Naive thymus-derived CD8-positive, alpha-beta T cell (primary cell): ENCODE measurements at regions of chr17 and their contacts with region 1.

Region 1: DNA sequence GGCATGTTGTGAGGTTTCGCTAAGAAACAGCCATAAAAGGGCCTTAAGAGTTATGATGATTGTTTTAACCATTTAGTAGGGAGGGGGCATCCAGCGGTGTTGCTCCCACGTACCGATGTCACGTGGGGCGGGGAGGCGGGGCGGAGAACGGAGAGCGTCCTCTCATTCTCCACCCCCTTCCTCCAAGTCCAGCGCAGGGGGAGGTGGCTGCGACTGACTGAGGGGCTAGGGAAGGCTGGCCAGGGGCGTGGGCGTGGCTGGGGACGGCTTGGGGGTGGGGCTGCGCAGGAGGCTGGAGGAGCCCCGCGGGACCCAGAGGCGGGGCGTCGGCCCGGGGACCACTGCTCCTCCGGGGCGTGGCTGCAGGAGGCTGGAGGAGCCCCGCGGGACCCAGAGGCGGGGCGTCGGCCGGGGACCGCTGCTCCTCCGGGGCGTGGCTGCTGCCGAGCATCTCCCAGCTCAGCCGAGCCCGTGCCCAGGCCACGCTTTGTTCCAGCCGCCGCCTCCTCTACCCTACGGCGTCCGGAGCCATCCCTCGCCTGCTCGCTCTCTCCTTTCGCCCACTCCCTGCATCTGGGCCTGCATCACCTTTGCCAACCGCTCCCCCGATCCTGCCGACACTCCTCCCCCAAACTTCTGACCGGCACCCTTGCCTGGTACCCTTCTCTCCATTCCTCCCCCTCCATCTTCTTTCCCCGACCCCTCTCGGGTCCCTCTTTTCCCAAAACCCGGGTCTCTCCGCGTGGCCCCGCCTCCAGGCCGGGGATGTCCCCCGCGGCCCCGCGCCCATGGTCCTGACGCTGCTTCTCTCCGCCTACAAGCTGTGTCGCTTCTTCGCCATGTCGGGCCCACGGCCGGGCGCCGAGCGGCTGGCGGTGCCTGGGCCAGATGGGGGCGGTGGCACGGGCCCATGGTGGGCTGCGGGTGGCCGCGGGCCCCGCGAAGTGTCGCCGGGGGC is at the start of gene SARM1:
- DNase-seq: peak; percentile 64 to 89 (median 76)
- ATAC-seq: peak; percentile 84 to 85
- H3K4me3 Mint-ChIP-seq: peak within 1 kb of the TSS; percentile 86 to 99 (median 96)
- H3K27ac Mint-ChIP-seq: peak within 1 kb of the TSS; percentile 87 to 98 (median 96)
- H3K4me1 Mint-ChIP-seq: peaks cover 12 to 25% (median 23%) of the 10 kb centered on the region in 4 donors
- H3K27me3 Mint-ChIP-seq: no peaks in the 10 kb centered on the region
- polyA plus RNA-seq, gene SARM1: 5.3 to 8.4 (median 7.0) TPM

Region 2: GRCh38 chr17:28384281-28385036 is 12.9 kb after region 1 on chr17:
- POLR2A ChIA-PET with region 1: interaction called, 16 read pairs
- DNase-seq: peak; percentile 40 to 75 (median 48)
- ATAC-seq: peak; percentile 90 to 94
- H3K4me3 Mint-ChIP-seq: peak overlapping the region; percentile 89 to 98 (median 94)
- H3K27ac Mint-ChIP-seq: peak overlapping the region; percentile 8 to 91 (median 86)
- H3K4me1 Mint-ChIP-seq: peaks cover 19 to 51% (median 36%) of the 10 kb centered on the region in 4 donors
- H3K27me3 Mint-ChIP-seq: peaks cover 0 to 10% (median 0%) of the 10 kb centered on the region in 5 donors